ENCODE measurements at regions of chr20 and their contacts with region 1.

Region 1: GRCh38 chr20:43749734-43750294 is 23.0 kb upstream of the GTSF1L start:
- DNase-seq: peak; percentile 95
- H3K4me3 Mint-ChIP-seq: peak overlapping the region; percentile 38
- H3K27ac Mint-ChIP-seq: peak overlapping the region; percentile 88
- H3K4me1 Mint-ChIP-seq: peaks cover 52% of the 10 kb centered on the region
- H3K27me3 Mint-ChIP-seq: no peaks in the 10 kb centered on the region

Region 2: GRCh38 chr20:43456809-43457639 is 292.8 kb before region 1 on chr20:
- intact Hi-C with region 1: loop called (anchors 5 kb)
- DNase-seq: peak; percentile 96
- H3K4me3 Mint-ChIP-seq: peak overlapping the region; percentile 93
- H3K27ac Mint-ChIP-seq: peak overlapping the region; percentile 98
- H3K4me1 Mint-ChIP-seq: peaks cover 22% of the 10 kb centered on the region
- H3K27me3 Mint-ChIP-seq: peaks cover 17% of the 10 kb centered on the region

Region 3: DNA sequence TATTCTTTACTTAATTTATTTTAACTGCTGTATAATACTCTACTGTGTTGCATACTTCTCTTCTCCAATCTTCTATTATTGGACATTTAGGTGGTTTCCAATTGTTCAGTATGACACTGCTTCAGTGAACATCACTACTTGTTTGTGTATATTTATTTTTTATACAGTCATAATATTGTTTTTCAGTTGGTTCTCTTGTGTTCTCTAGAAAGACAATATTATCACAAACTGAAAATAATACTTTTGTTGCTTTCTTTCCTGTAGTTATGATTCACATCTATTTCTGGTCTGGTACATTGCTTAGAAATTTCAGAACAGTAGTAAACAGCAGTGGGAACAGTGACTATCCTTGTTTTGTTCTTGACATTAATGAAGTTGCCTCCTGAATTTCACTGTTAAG is 39.8 kb after region 1 on chr20:
- intact Hi-C with region 1: loop called (anchors 2 kb)
- DNase-seq: no peak
- H3K4me3 Mint-ChIP-seq: no peak overlapping the region
- H3K27ac Mint-ChIP-seq: no peak overlapping the region
- H3K4me1 Mint-ChIP-seq: peaks cover 3% of the 10 kb centered on the region
- H3K27me3 Mint-ChIP-seq: peaks cover 4% of the 10 kb centered on the region

Region 4: DNA sequence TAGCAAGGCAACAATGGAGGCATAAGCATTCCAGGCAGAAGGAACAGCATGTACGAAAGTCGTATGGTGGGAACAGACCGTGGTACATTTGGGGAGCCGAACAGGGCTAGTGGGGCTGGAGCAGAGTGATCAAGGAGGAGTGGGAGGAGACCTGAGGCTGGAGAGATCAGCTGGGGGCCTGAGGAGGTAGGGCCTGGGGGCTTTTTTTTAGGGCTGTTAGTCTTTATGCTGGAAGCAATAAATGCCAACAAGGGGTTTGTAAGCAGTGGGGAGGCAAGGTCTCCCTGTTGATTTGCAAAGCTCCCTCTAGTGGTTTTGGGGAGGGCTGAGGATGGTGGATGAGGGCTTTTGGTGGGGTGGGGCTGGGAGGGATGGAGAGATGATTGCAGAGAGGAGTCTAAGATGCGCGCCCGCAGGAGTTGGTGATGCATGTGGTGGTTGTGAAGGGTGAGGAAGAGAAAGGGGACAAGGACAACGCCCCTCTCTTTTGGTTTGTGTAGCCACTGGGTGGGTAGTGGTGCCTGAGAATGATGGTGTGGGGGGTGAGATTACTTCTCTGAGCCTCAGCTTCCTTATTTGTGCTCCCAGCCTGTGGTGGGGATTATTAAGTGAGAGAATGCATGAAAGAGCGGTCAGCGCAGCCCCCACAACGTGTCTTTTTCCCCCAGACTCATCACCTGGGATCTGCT is 90.7 kb after region 1 on chr20:
- intact Hi-C with region 1: loop called (anchors 1 kb)
- DNase-seq: peak; percentile 78
- H3K4me3 Mint-ChIP-seq: no peak overlapping the region
- H3K27ac Mint-ChIP-seq: peak overlapping the region; percentile 73
- H3K4me1 Mint-ChIP-seq: peaks cover 55% of the 10 kb centered on the region
- H3K27me3 Mint-ChIP-seq: peaks cover 4% of the 10 kb centered on the region

Region 5: DNA sequence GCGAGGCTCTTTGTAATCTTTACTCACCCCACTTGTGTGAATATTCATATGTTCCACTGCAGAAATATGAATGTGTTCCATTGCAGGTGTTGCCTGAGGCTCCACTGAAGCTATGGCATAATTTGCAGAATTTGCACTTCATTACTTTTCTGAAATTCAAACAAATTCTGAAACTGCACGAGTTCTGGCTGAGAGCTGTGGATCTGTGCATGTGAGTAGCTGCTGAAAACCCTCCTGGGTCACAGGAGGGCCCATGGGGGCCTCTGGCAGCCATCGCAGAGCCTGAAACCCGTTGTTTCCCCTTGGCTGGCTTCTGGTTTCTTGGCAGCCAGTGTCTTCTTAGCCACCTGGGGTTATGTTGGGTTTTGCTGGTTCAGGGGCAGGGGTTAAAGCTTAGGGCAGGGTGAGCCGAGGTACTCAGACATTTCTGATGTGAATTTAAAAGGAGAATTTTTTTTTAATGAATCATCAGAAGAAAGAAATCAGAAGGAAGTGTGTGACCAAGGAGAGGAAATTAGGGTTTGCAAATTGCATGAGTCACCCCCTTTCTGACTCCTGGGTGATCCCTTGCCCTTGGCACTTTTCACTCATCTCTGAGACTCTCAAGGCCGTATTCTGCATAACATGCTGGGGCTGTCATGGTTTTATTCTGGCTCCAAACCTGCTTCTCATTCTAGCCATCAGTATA is 205.4 kb after region 1 on chr20:
- intact Hi-C with region 1: loop called (anchors 1 kb)
- DNase-seq: peak; percentile 80
- H3K4me3 Mint-ChIP-seq: peak overlapping the region; percentile 29
- H3K27ac Mint-ChIP-seq: peak overlapping the region; percentile 88
- H3K4me1 Mint-ChIP-seq: peaks cover 62% of the 10 kb centered on the region
- H3K27me3 Mint-ChIP-seq: peaks cover 15% of the 10 kb centered on the region

Region 6: DNA sequence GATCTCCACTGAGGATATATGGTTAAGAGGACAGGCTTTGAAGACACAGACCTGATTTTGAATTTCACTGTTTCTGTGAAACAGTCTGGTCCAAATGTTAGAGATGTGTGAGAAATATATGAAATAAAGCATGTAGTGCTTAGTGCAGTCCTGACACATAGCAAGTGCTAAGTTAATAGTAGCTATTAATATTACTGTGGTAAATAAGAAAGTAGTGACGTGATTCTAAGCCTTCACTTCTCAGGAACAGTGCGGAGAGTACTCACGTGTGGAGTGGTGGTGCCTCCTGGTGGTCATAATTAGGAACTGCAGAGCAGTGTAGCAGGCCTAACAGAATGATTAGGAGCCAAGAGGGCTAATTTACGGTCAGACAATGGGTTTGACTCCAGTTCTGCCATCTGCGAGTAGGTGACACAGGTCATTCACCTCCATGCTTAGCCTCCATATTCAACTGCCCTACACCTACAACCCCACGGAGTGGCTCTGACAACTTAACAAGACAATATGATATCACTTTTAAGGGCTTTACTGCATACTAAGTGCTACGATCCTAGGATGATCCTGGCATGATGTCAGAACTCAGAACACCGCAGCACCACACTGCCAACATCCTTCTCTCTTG is 330.9 kb after region 1 on chr20:
- intact Hi-C with region 1: loop called (anchors 1 kb)
- DNase-seq: peak; percentile 92
- H3K4me3 Mint-ChIP-seq: no peak overlapping the region
- H3K27ac Mint-ChIP-seq: peak overlapping the region; percentile 13
- H3K4me1 Mint-ChIP-seq: peaks cover 21% of the 10 kb centered on the region
- H3K27me3 Mint-ChIP-seq: peaks cover 2% of the 10 kb centered on the region